Gastrocnemius medialis (tissue), 4 donors: ENCODE measurements at regions of chrX and their contacts with region 1.

Region 1: DNA sequence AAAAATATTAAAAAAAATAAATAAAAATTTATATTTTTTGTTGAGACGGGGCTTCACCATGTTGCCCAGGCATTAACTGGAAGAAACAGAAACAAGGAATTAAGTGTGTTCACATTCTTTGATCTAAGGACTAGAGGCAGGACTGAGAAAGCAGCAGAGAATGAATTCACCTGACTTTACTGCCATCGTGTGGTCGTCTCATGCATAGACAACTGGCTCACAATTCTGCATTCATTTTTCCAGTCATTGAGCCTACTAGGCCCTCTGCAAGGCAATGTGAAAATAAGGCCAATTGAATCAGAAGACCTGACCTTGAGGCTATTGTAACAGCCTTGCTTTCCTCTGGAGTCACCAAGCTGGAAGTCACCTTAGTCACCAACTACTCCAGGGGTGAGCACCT is 37.4 kb downstream of the LHFPL1 start:
- DNase-seq: no peak
- ATAC-seq: peak; percentile 68 to 84
- H3K4me3 ChIP-seq: no peak overlapping the region
- H3K27ac ChIP-seq: no peak overlapping the region
- H3K4me1 ChIP-seq: no peaks in the 10 kb centered on the region
- H3K27me3 ChIP-seq: no peaks in the 10 kb centered on the region
- CTCF ChIP-seq: peak; percentile 11 to 71 (median 63)
- POLR2A ChIP-seq: no peak

Region 2: DNA sequence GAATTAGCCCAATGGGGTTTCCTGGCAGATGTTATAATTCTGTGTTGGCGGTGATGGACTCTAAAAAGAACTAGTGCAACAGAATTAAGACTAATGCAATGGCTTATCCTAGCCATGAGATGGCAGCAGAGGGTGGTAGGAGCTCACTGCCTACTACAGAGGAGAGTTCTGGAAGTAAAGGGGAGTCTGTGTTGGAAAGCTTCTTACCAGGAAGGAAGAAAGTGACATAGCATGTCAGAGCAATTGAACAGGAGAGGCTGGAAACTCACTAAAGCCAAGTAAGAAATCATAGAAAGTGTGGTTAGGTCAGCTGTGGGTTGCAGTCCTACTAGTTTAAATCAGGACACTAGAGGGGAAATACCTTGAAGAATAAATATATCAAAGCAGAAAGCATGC is 772.7 kb before region 1 on chrX:
- in situ Hi-C with region 1: loop called (anchors 10 to 25 kb)
- intact Hi-C with region 1: loop called (anchors 2 kb)
- DNase-seq: no peak
- ATAC-seq: peak; percentile 66 to 68
- H3K4me3 ChIP-seq: no peak overlapping the region
- H3K27ac ChIP-seq: no peak overlapping the region
- H3K4me1 ChIP-seq: no peaks in the 10 kb centered on the region
- H3K27me3 ChIP-seq: peaks cover 0 to 3% (median 0%) of the 10 kb centered on the region in 3 donors
- CTCF ChIP-seq: peak; percentile 25 to 64 (median 49)
- POLR2A ChIP-seq: no peak

Region 3: DNA sequence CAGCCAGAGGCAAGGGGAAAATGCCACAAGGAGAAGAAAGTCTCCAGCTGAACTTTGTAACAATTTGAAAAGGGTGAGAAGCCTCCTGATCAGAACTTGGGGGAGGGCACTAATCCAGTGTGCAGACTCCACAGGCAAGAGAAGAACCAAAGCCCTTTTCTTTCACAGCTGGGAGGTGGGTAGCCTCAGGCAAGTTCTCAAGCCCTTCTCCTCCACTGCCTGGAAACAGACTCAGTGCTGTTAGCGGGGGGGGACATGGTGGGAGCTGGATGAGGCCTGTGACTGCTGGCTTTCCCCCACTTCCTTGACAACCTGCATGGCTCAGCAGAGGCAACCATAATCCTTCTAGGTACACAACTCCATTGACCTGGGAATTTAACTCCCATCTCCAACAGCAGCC is 55.2 kb before region 1 on chrX:
- in situ Hi-C with region 1: no loop called
- intact Hi-C with region 1: no loop called
- DNase-seq: no peak
- ATAC-seq: no peak
- H3K4me3 ChIP-seq: no peak overlapping the region
- H3K27ac ChIP-seq: no peak overlapping the region
- H3K4me1 ChIP-seq: no peaks in the 10 kb centered on the region
- H3K27me3 ChIP-seq: no peaks in the 10 kb centered on the region
- CTCF ChIP-seq: no peak
- POLR2A ChIP-seq: no peak

Region 4: GRCh38 chrX:113759422-113759821 is 1117.1 kb after region 1 on chrX:
- in situ Hi-C with region 1: no loop called
- intact Hi-C with region 1: no loop called
- DNase-seq: no peak
- ATAC-seq: no peak
- H3K4me3 ChIP-seq: no peak overlapping the region
- H3K27ac ChIP-seq: no peak overlapping the region
- H3K4me1 ChIP-seq: no peaks in the 10 kb centered on the region
- H3K27me3 ChIP-seq: no peaks in the 10 kb centered on the region
- CTCF ChIP-seq: no peak
- POLR2A ChIP-seq: no peak